ENCODE measurements at regions of chrX and their contacts with region 1.

Region 1: DNA sequence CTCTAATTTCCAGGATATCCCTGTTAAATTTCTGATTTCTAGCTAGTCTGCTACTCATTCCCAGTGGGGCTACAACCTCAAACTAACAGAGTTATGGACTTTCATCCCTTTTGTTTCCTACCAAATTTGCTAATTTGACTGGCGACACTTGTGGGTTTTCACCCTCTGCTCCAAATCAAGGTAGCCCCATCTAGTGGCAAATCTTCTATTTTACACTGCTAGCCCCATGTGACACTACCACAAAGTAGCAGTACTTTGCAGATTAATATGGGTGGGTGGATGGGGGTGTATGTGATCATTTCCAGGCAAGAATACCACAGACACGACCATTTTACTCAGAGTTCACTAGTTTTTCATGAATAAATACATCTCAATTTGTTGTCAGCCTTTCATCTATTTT is 150.3 kb downstream of the MSL3 start:
- DNase-seq: peak; percentile 59
- H3K4me3 Mint-ChIP-seq: no peak overlapping the region
- H3K27ac Mint-ChIP-seq: no peak overlapping the region
- H3K4me1 Mint-ChIP-seq: no peaks in the 10 kb centered on the region
- H3K27me3 Mint-ChIP-seq: peaks cover 37% of the 10 kb centered on the region
- CTCF ChIP-seq: peak; percentile 42

Region 2: DNA sequence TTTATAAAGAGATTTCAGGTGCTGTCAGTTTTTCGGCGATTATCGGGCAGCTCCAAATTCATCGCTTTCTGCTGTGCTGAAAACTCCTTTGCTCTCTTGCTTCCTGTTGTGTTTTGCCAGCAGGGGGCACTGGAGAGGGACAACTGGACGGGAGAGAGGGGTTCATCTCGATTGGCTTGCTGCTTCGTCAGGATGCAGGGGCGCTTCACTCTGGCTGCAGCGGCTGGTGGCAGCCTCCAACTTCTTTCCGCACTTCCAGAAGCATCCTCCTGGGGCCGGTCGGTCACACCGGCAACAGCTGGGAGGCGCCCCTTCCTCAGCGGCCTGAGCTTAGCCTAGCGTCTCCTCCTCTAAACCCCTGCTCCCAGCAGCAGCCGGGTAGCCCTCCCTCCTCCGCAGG is 120.8 kb before region 1 on chrX:
- CTCF ChIA-PET with region 1: no interaction called
- POLR2A ChIA-PET with region 1: no interaction called
- intact Hi-C with region 1: loop called (anchors 1 kb)
- DNase-seq: peak; percentile 67
- H3K4me3 Mint-ChIP-seq: peak overlapping the region; percentile 35
- H3K27ac Mint-ChIP-seq: no peak overlapping the region
- H3K4me1 Mint-ChIP-seq: no peaks in the 10 kb centered on the region
- H3K27me3 Mint-ChIP-seq: peaks cover 10% of the 10 kb centered on the region
- CTCF ChIP-seq: peak; percentile 46